IMR-90 (cell line): ENCODE measurements at regions of chr4 and their contacts with region 1.

Region 1: GRCh38 chr4:110631584-110632505 is 9.0 kb upstream of the PITX2 start:
- DNase-seq: peak; percentile 84
- ATAC-seq: peak; percentile 95
- H3K4me3 ChIP-seq: peak overlapping the region; percentile 34
- H3K27ac ChIP-seq: no peak overlapping the region
- H3K4me1 ChIP-seq: 0 out of 2 replicates have a peak, but pooled peaks cover 2% of the 10 kb centered on the region
- H3K27me3 ChIP-seq: peaks cover 78% of the 10 kb centered on the region
- CTCF ChIP-seq: peak; percentile 96
- POLR2A ChIP-seq: 0 out of 2 replicates have a peak, but pooled peaks have one; percentile 32
- RAD21 ChIP-seq: peak; percentile 98

Region 2: DNA sequence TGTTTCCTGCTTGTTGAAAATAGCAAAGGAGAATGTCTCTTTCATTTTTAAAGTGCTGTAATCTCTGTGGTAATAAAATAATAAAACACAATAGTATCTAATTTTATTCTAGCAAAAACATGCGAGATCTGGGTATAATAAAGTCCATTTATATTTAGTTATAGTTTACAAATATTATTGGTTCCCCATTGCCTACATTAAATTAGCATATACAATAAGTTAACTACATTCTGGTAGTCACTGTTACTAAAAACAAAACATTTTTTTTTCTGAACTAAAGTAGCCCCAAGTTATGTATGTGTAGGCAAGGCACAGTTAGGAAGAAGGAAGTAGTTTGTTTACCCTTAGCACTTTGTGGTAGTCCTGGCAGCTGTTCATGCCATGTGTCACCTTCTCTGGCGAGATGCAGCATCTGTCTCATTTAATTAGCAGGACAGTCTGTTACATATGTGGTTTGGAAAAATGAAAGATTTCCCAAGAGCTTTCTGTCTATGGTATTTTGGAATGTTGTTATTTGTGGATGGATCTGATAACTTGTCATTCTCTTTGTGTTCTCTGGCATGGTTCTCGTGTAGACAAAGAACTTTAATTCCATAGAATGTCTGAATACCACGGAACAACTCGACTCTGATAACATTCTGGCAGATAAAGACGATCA is 222.3 kb after region 1 on chr4:
- CTCF ChIA-PET with region 1: no interaction called
- POLR2A ChIA-PET with region 1: no interaction called
- dilution Hi-C with region 1: no loop called
- in situ Hi-C with region 1: no loop called
- intact Hi-C with region 1: loop called (anchors 2 kb)
- DNase-seq: peak; percentile 84
- ATAC-seq: peak; percentile 84
- H3K4me3 ChIP-seq: no peak overlapping the region
- H3K27ac ChIP-seq: no peak overlapping the region
- H3K4me1 ChIP-seq: no peaks in the 10 kb centered on the region
- H3K27me3 ChIP-seq: peaks cover 4% of the 10 kb centered on the region; the same call in 1 of the 2 replicates
- CTCF ChIP-seq: no peak
- POLR2A ChIP-seq: no peak
- RAD21 ChIP-seq: no peak

Region 3: DNA sequence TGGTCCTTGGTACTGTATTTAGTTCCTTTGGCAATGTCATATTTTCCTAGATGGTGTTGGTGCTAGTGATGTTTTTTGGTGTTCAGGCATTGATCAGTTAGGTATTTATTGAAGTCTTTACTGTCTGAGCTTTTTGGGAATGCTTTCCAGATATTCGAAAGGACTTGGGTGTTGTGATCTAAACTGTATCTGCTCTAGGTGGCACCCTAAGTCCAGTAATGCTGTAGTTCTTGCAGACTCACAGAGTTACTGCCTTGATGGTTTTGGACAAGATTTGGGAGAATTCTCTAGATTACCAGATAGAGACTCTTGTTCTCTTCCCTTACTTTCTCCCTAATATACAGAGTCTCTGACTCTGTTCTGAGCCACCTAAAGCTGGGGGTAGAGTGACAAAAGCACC is 504.6 kb after region 1 on chr4:
- CTCF ChIA-PET with region 1: no interaction called
- POLR2A ChIA-PET with region 1: no interaction called
- dilution Hi-C with region 1: no loop called
- in situ Hi-C with region 1: no loop called
- intact Hi-C with region 1: loop called (anchors 5 kb)
- DNase-seq: peak; percentile 59
- ATAC-seq: peak; percentile 73
- H3K4me3 ChIP-seq: no peak overlapping the region
- H3K27ac ChIP-seq: no peak overlapping the region
- H3K4me1 ChIP-seq: no peaks in the 10 kb centered on the region
- H3K27me3 ChIP-seq: no peaks in the 10 kb centered on the region
- CTCF ChIP-seq: peak; percentile 60
- POLR2A ChIP-seq: no peak
- RAD21 ChIP-seq: peak; percentile 75

Region 4: GRCh38 chr4:111362941-111363361 is 731.1 kb after region 1 on chr4:
- CTCF ChIA-PET with region 1: no interaction called
- POLR2A ChIA-PET with region 1: no interaction called
- dilution Hi-C with region 1: no loop called
- in situ Hi-C with region 1: no loop called
- intact Hi-C with region 1: loop called (anchors 10 kb)
- DNase-seq: peak; percentile 35
- ATAC-seq: peak; percentile 60
- H3K4me3 ChIP-seq: no peak overlapping the region
- H3K27ac ChIP-seq: no peak overlapping the region
- H3K4me1 ChIP-seq: no peaks in the 10 kb centered on the region; the same call in 1 of the 2 replicates
- H3K27me3 ChIP-seq: no peaks in the 10 kb centered on the region
- CTCF ChIP-seq: no peak
- POLR2A ChIP-seq: no peak
- RAD21 ChIP-seq: no peak

Region 5: GRCh38 chr4:111631215-111631999 is 999.6 kb after region 1 on chr4:
- CTCF ChIA-PET with region 1: no interaction called
- POLR2A ChIA-PET with region 1: no interaction called
- dilution Hi-C with region 1: no loop called
- in situ Hi-C with region 1: loop called (anchors 5 kb)
- intact Hi-C with region 1: loop called (anchors 1 kb)
- DNase-seq: peak; percentile 37
- ATAC-seq: no peak
- H3K4me3 ChIP-seq: no peak overlapping the region
- H3K27ac ChIP-seq: no peak overlapping the region
- H3K4me1 ChIP-seq: no peaks in the 10 kb centered on the region
- H3K27me3 ChIP-seq: no peaks in the 10 kb centered on the region
- CTCF ChIP-seq: peak; percentile 50
- POLR2A ChIP-seq: no peak
- RAD21 ChIP-seq: peak; percentile 43

Region 6: DNA sequence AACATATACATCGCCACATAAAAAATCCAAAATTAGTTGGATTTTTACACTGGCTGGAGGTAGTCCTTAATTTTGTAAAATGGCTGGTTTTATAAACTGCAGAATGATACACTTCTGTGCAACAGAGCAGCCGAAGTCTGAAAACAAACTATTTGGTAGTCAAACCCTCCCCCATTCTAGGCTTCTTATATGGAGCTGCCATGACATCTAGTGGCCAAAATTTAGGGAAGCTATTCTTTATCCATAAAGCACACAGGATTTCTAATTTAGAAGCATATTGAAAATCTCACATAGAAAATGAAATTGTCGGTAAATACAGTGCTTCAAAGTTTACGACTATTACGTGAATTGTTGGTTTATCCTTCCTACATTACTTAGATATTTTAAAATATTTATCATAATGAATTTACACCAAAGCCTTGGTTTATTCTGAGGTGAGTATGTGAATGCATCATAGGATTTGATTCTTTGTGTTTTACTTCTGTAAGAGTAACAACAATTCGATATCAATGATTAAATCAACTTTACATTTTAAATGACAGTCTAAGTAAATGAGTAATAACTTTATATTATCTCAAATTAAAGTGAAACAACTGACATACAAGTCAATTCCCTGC is 1400.0 kb after region 1 on chr4:
- CTCF ChIA-PET with region 1: interaction called, 4 read pairs
- POLR2A ChIA-PET with region 1: no interaction called
- dilution Hi-C with region 1: no loop called
- in situ Hi-C with region 1: loop called (anchors 25 kb)
- intact Hi-C with region 1: loop called (anchors 5 kb)
- DNase-seq: peak; percentile 50
- ATAC-seq: peak; percentile 89
- H3K4me3 ChIP-seq: no peak overlapping the region
- H3K27ac ChIP-seq: no peak overlapping the region
- H3K4me1 ChIP-seq: no peaks in the 10 kb centered on the region
- H3K27me3 ChIP-seq: peaks cover 2% of the 10 kb centered on the region; the same call in 1 of the 2 replicates
- CTCF ChIP-seq: peak; percentile 69
- POLR2A ChIP-seq: no peak
- RAD21 ChIP-seq: peak; percentile 71